Motor neuron (in vitro differentiated cells): ENCODE measurements at regions of chr6 and their contacts with region 1.

Region 1: GRCh38 chr6:25601800-25602673 is 50.0 kb upstream of the SCGN start:
- ATAC-seq: peak in 3 of 8 experiments; percentile 17 to 49 (median 30)
- H3K4me3 ChIP-seq: no peak overlapping the region
- H3K27ac ChIP-seq: no peak overlapping the region
- H3K4me1 ChIP-seq: no peaks in the 10 kb centered on the region

Region 2: GRCh38 chr6:25922301-25922700 is 320.3 kb after region 1 on chr6:
- in situ Hi-C with region 1: loop called in 2 of 9 experiments (anchors 25 kb)
- ATAC-seq: peak in 1 of 8 experiments; percentile 23
- H3K4me3 ChIP-seq: no peak overlapping the region
- H3K27ac ChIP-seq: no peak overlapping the region
- H3K4me1 ChIP-seq: no peaks in the 10 kb centered on the region

Region 3: GRCh38 chr6:25942561-25943147 is 340.6 kb after region 1 on chr6:
- in situ Hi-C with region 1: loop called in 1 of 9 experiments (anchors 25 kb)
- ATAC-seq: peak in 6 of 8 experiments; percentile 42 to 94 (median 82)
- H3K4me3 ChIP-seq: no peak overlapping the region
- H3K27ac ChIP-seq: no peak overlapping the region
- H3K4me1 ChIP-seq: no peaks in the 10 kb centered on the region

Region 4: DNA sequence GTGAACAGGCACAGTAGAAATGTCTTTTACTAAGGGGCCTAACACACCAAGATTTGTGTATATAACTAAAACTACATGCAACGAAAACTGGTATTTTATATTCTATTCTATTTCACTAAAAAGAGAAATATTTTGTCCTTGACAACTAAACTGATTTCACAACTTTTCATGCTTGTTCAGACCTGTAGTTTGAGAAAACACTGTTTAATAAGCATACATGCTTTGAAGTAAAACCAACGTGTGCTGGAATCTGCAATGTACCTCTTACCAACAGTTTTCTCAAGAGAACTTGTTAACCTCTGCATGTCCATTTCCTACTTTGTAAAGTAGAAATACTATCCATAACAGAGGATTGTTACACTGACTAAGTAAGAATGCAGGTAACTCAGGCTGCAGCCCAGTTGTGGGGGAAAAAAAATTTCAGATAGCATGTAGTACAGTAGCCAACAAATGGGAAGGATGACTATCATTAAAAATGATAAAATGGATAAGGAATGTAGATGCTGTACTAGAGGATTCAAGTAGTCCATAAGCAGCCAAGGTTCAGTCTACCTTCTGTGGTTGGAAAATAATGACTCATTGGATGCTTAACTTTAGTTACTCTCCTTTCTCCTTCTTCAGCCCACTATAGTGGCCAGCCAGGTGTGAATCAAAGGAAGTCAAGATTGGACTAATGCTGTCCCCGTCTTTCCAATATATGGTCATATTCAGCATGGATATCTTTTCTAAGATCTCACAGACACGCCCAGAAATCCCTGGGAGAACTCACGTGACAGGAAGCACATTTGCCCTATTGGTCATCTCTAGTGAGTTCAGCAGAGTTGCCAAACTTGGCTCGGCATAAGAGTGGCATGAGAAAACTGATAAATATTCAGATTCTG is 550.4 kb after region 1 on chr6:
- in situ Hi-C with region 1: no loop called
- ATAC-seq: no peak
- H3K4me3 ChIP-seq: no peak overlapping the region
- H3K27ac ChIP-seq: no peak overlapping the region
- H3K4me1 ChIP-seq: peaks cover 5% of the 10 kb centered on the region in 2 donors